HCT116 (cell line): ENCODE measurements at regions of chr11 and their contacts with region 1.

Region 1: GRCh38 chr11:61947486-61948210 is 2.5 kb upstream of the BEST1 start:
- DNase-seq: peak; percentile 62
- ATAC-seq: peak; percentile 91
- H3K4me3 ChIP-seq: no peak overlapping the region
- H3K27ac ChIP-seq: no peak overlapping the region; the same call in 1 of the 2 replicates
- H3K4me1 ChIP-seq: peaks cover 4 to 13% of the 10 kb centered on the region in 2 experiments; a peak in 2 of 4 replicates
- H3K27me3 ChIP-seq: no peaks in the 10 kb centered on the region
- CTCF ChIP-seq: peak; percentile 93 to 96 (median 95)
- POLR2A ChIP-seq: no peak
- RAD21 ChIP-seq: peak; percentile 98

Region 2: DNA sequence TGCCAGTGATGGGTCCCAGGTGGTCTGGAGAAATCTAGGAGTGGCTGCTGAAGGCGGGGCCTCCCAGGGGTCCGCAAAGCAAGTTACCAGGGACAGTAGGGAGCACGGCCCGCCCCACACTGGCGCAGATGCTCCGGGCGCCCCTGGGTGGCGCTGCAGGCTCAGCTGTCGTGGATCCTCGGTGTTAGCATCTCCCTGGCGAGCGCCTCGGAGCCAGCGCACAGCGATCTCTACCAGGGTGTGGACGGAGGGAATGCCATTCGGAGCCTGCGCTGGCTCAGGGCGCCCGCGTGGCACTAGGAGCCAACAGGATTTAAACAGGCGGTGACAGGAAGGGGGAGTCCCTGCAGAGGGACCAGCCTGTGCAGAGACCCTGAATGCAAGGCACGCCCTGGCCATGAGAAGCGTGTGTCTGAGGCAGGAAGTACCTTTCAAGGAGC is 76.5 kb before region 1 on chr11:
- CTCF ChIA-PET with region 1: interaction called, 16 read pairs
- POLR2A ChIA-PET with region 1: interaction called, 6 read pairs
- RAD21 ChIA-PET with region 1: interaction called, 3 to 11 read pairs
- intact Hi-C with region 1: loop called (anchors 1 kb)
- DNase-seq: peak; percentile 43
- ATAC-seq: peak; percentile 99
- H3K4me3 ChIP-seq: peak overlapping the region; percentile 6 to 47; a peak in 3 of 4 replicates
- H3K27ac ChIP-seq: no peak overlapping the region
- H3K4me1 ChIP-seq: peaks cover 9 to 20% of the 10 kb centered on the region in 2 experiments
- H3K27me3 ChIP-seq: no peaks in the 10 kb centered on the region
- CTCF ChIP-seq: peak; percentile 86 to 96 (median 94)
- POLR2A ChIP-seq: no peak
- RAD21 ChIP-seq: peak; percentile 99

Region 3: GRCh38 chr11:61908730-61909315 is 38.8 kb before region 1 on chr11:
- CTCF ChIA-PET with region 1: interaction called, 9 read pairs
- POLR2A ChIA-PET with region 1: no interaction called
- RAD21 ChIA-PET with region 1: interaction called in 1 of 2 experiments, 13 read pairs
- intact Hi-C with region 1: no loop called
- DNase-seq: no peak
- ATAC-seq: no peak
- H3K4me3 ChIP-seq: no peak overlapping the region
- H3K27ac ChIP-seq: no peak overlapping the region
- H3K4me1 ChIP-seq: no peaks in the 10 kb centered on the region
- H3K27me3 ChIP-seq: no peaks in the 10 kb centered on the region
- CTCF ChIP-seq: no peak
- POLR2A ChIP-seq: no peak
- RAD21 ChIP-seq: no peak

Region 4: DNA sequence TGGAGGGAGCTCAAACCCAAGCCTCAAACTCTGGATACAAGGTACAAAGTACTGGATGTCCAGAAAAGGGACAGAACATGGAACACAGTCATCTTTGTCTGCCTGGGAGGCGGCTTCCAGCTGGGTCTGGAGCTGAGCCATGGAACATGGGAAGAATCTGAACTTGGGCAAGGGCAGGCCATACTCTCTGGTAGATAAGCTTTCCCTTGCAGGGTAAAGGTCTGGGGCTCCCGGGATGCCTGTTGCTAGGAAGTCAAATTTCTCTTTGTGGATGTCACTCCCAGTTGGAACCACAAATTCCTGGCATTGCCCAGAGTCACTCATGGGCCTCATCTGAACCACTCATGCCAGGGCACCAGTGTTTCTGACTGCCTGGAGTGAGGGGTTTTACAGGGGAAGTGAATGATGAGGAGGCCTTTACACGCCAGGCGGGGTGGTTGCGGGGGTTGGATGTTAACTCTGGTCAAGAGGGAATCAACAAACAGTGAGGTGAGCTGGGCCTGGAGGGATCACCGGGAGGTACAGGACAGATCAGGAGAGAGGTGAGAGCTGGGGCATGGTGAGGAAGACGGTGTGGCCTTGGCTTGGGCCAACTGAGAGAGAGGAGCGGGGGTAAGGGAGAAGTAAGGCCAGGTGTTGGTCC is 14.0 kb after region 1 on chr11:
- CTCF ChIA-PET with region 1: interaction called, 10 read pairs
- POLR2A ChIA-PET with region 1: interaction called, 60 read pairs
- RAD21 ChIA-PET with region 1: no interaction called
- intact Hi-C with region 1: no loop called
- DNase-seq: no peak
- ATAC-seq: peak; percentile 6; the same call in 1 of the 2 replicates
- H3K4me3 ChIP-seq: no peak overlapping the region
- H3K27ac ChIP-seq: no peak overlapping the region
- H3K4me1 ChIP-seq: peaks cover 3 to 59% of the 10 kb centered on the region in 2 experiments; a peak in 3 of 4 replicates
- H3K27me3 ChIP-seq: no peaks in the 10 kb centered on the region
- CTCF ChIP-seq: no peak
- POLR2A ChIP-seq: no peak
- RAD21 ChIP-seq: no peak

Region 5: DNA sequence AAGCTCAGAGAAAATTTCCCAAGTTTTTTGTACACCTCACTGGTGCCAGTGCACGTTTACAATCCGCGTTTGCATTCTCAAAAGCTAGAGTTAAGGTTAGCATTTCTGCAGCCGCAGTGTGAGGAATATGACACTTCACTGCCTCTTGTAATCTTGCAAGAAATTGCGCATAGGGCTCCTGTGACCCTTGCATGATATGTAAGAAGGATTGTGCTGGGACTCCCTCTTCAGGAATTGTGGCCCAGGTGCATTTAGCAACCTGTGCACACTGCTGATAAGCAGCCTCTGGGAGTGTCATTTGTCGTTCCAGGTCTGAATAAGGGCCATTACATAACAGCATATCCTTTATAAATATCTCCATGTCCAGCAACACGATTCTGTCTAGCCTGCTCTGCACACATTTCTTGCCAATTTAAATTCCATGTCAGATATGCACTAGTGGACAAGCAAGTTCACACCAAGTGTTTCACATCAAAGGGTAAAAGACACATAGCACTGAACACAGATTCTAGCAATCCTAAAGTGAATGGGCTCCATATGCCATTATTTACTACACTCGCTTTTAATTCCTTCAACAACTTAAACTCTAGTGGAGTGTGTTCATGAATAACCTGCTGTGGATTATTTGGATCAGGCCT is 107.0 kb after region 1 on chr11:
- CTCF ChIA-PET with region 1: interaction called, 12 read pairs
- POLR2A ChIA-PET with region 1: interaction called, 15 read pairs
- RAD21 ChIA-PET with region 1: interaction called in 1 of 2 experiments, 5 read pairs
- intact Hi-C with region 1: loop called (anchors 1 kb)
- DNase-seq: peak; percentile 87
- ATAC-seq: peak; percentile 98
- H3K4me3 ChIP-seq: no peak overlapping the region
- H3K27ac ChIP-seq: no peak overlapping the region
- H3K4me1 ChIP-seq: peaks cover 13 to 19% of the 10 kb centered on the region in 2 experiments; a peak in 3 of 4 replicates
- H3K27me3 ChIP-seq: no peaks in the 10 kb centered on the region
- CTCF ChIP-seq: peak; percentile 79 to 95 (median 80)
- POLR2A ChIP-seq: no peak
- RAD21 ChIP-seq: peak; percentile 99

Region 6: GRCh38 chr11:62108017-62108750 is 160.5 kb after region 1 on chr11:
- CTCF ChIA-PET with region 1: interaction called, 17 read pairs
- POLR2A ChIA-PET with region 1: no interaction called
- RAD21 ChIA-PET with region 1: no interaction called
- intact Hi-C with region 1: no loop called
- DNase-seq: peak; percentile 59
- ATAC-seq: peak; percentile 84
- H3K4me3 ChIP-seq: no peak overlapping the region
- H3K27ac ChIP-seq: no peak overlapping the region
- H3K4me1 ChIP-seq: no peaks in the 10 kb centered on the region; a peak in 1 of 4 replicates
- H3K27me3 ChIP-seq: no peaks in the 10 kb centered on the region
- CTCF ChIP-seq: peak; percentile 68 to 92 (median 88)
- POLR2A ChIP-seq: no peak
- RAD21 ChIP-seq: peak; percentile 95